Esophagus muscularis mucosa (tissue), 4 donors: ENCODE measurements at regions of chr10 and their contacts with region 1.

Region 1: GRCh38 chr10:79445141-79445976 is at the start of gene ZCCHC24:
- DNase-seq: peak; percentile 100
- H3K4me3 ChIP-seq: peak within 1 kb of the TSS; percentile 82 to 98 (median 90)
- H3K27ac ChIP-seq: peak within 1 kb of the TSS; percentile 94 to 97 (median 96)
- H3K4me1 ChIP-seq: peaks cover 35 to 62% (median 51%) of the 10 kb centered on the region in 4 donors
- H3K27me3 ChIP-seq: no peaks in the 10 kb centered on the region
- CTCF ChIP-seq: peak in 1 of 3 experiments; percentile 14
- EP300 ChIP-seq: no peak
- POLR2A ChIP-seq: no peak
- total RNA-seq, gene ZCCHC24: 100 to 156 (median 120) TPM

Region 2: DNA sequence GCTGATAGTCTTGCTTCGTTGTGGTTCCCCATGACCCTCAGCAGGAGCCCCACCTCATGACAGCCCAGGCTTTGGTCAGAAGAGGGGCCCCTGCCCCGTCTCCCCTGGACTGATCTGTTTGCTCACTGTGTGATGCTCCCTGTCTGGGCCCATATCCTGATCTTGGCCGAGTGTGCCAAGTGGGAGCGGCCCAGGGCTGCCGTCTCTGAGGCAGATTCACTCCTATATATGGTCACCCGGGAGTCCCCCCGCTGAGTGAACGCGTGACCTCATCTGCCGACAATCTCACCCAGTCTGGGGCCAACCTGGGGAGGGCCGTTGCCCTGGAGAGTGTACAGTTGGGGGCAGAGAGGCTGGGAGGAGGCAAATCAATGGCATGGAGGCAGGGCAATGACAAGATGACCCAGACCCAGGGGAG is 63.5 kb before region 1 on chr10:
- intact Hi-C with region 1: loop called (anchors 5 kb)
- DNase-seq: peak; percentile 95
- H3K4me3 ChIP-seq: no peak overlapping the region
- H3K27ac ChIP-seq: peak overlapping the region; percentile 87 to 93 (median 92)
- H3K4me1 ChIP-seq: peaks cover 43 to 75% (median 54%) of the 10 kb centered on the region in 4 donors
- H3K27me3 ChIP-seq: no peaks in the 10 kb centered on the region
- CTCF ChIP-seq: no peak
- EP300 ChIP-seq: no peak
- POLR2A ChIP-seq: no peak

Region 3: DNA sequence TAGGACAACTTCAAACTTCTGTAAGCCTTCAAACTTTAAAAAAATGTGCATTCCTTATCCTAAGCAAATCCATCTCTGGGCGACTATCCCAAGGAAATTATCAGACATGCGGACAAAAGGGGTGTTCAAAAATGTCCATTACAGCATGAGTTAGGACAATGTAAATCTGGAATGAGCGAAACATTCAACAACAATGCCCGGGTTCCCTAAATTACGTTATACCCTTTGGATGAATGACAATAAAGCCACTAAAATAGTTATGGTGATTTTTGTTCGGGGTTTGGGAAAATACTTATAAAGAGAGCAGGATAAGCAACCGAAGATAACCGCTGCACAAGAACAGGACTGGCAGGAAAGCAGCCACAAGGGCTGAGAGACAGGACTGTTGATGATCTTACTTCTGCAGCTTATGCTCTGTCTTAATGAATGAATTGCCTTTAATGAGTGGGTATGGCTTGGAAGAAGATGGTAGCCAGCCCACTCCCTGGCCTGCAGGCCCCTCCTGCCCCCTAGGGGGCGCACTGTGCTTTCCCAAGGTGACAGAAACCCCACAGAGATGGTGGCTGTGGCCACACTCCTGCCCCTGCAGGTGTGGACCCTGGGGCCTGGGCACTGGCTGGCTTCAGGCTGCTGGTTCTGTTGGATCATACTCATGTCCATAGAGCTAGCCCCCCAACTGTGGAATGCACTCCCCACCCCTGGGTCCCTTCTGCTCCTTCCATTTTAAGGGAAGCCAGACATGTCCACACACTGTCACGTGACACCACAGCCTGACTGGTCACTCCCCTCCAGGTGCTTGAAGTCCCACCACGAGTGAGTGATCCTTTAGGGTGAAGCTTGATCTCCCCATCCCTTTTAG is 45.0 kb before region 1 on chr10:
- intact Hi-C with region 1: loop called (anchors 5 kb)
- DNase-seq: no peak
- H3K4me3 ChIP-seq: peak overlapping the region in 1 of 4 donors; percentile 20
- H3K27ac ChIP-seq: no peak overlapping the region
- H3K4me1 ChIP-seq: no peaks in the 10 kb centered on the region
- H3K27me3 ChIP-seq: no peaks in the 10 kb centered on the region
- CTCF ChIP-seq: peak; percentile 46 to 64 (median 48)
- EP300 ChIP-seq: no peak
- POLR2A ChIP-seq: no peak